Dendritic cell treated with granulocyte-macrophage colony-stimulating factor and Interleukin-4, amounts not matched to agents 40 ng/mL and 50 ng/mL, for 4 days (primary cell): ENCODE measurements at regions of chr9 and their contacts with region 1.

Region 1: DNA sequence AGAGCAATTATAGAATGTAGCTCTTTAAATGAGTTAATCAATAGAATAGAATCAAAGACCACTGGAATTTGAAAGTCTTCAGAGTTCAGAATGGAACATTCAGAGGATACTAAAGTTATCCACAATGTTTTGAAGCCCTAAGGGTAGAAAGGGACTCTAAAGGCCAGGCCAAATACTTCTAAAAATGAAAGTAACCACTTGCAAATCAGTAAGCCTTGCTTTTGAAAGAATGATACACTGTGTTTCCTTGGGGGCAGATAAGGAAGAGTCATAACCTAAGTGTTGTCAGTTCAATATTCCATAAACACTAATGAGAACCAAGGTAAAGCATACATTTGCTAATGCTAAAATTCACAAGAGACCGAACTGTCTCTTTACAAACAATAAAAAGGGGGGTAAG is 813.5 kb downstream of the PTPRD start:
- H3K4me3 Mint-ChIP-seq: no peak overlapping the region
- H3K27ac Mint-ChIP-seq: no peak overlapping the region
- H3K4me1 Mint-ChIP-seq: no peaks in the 10 kb centered on the region
- H3K27me3 Mint-ChIP-seq: no peaks in the 10 kb centered on the region

Region 2: GRCh38 chr9:9536523-9536922 is 262.8 kb before region 1 on chr9:
- intact Hi-C with region 1: loop called (anchors 5 kb)
- H3K4me3 Mint-ChIP-seq: no peak overlapping the region
- H3K27ac Mint-ChIP-seq: no peak overlapping the region
- H3K4me1 Mint-ChIP-seq: no peaks in the 10 kb centered on the region
- H3K27me3 Mint-ChIP-seq: no peaks in the 10 kb centered on the region

Region 3: GRCh38 chr9:9557804-9558334 is 241.4 kb before region 1 on chr9:
- intact Hi-C with region 1: no loop called
- H3K4me3 Mint-ChIP-seq: no peak overlapping the region
- H3K27ac Mint-ChIP-seq: no peak overlapping the region
- H3K4me1 Mint-ChIP-seq: no peaks in the 10 kb centered on the region
- H3K27me3 Mint-ChIP-seq: no peaks in the 10 kb centered on the region

Region 4: DNA sequence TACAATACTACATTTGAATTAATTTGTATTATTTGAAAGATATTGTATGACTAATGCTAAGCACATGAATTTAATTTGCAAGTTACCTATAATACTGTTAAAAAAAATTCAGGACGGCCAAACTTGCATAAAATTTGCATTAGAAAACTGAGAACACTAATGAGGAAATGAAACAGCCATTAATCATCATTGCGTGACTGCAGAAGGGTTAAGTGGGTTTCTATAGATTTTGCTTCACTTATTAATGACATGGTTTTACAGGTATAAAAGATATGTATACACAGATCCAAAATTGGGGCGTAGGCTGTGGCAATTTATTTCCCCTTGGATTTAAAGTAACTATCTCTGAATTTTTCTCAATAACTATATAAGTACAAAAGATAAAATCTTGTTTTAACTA is 69.1 kb before region 1 on chr9:
- intact Hi-C with region 1: no loop called
- H3K4me3 Mint-ChIP-seq: no peak overlapping the region
- H3K27ac Mint-ChIP-seq: no peak overlapping the region
- H3K4me1 Mint-ChIP-seq: no peaks in the 10 kb centered on the region
- H3K27me3 Mint-ChIP-seq: no peaks in the 10 kb centered on the region